ENCODE measurements at regions of chr17 and their contacts with region 1.

Region 1: DNA sequence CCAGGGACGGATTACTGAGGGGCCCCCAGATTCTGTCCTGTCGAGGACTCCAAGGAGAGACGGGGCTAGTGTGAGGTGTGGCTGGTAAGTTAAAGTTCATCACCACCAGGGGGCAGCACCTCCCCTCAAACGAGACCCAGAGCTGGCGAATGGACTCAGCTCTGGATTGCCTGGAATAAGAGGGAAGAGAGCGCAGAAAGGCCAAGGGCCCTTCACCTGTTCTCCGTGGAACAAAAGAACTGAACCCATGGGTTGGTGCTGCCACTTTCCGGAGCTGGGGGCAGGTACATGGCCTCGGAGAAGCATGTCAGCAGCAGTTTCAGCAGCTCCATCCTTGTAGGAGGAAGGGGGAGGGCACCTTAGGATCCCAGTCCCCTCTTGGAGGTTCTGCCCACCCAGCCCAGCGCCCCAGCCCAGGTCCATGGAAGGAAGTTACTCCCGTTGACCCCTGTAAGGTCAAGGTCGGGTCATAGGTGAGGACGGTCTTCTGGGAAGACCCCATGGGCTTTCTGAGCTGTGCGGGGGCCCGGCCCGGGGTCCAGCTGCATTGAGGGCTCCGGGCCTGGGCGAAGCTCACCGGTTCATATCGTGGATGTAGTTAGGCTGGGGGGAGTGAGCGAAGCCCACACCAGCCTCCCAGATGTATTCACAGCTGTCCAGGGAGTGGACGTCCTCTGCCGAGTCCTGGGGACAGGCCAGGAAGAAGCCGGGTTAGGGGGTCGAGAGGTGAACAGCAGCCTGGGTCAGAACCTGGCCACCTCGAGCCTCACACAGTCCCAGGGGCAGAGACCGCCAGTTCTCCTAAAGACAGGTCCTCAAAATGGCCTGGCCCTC is 10.7 kb downstream of the HID1 start:
- DNase-seq: peak; percentile 88 to 91 (median 89)
- ATAC-seq: peak; percentile 78 to 91 (median 86)
- H3K4me3 ChIP-seq: no peak overlapping the region
- H3K27ac ChIP-seq: no peak overlapping the region
- H3K4me1 ChIP-seq: peaks cover 0 to 6% (median 0%) of the 10 kb centered on the region in 12 donors
- H3K27me3 ChIP-seq: peaks cover 0 to 5% (median 0%) of the 10 kb centered on the region in 9 donors
- CTCF ChIP-seq: peak; percentile 67 to 89 (median 80)
- POLR2A ChIP-seq: no peak

Region 2: DNA sequence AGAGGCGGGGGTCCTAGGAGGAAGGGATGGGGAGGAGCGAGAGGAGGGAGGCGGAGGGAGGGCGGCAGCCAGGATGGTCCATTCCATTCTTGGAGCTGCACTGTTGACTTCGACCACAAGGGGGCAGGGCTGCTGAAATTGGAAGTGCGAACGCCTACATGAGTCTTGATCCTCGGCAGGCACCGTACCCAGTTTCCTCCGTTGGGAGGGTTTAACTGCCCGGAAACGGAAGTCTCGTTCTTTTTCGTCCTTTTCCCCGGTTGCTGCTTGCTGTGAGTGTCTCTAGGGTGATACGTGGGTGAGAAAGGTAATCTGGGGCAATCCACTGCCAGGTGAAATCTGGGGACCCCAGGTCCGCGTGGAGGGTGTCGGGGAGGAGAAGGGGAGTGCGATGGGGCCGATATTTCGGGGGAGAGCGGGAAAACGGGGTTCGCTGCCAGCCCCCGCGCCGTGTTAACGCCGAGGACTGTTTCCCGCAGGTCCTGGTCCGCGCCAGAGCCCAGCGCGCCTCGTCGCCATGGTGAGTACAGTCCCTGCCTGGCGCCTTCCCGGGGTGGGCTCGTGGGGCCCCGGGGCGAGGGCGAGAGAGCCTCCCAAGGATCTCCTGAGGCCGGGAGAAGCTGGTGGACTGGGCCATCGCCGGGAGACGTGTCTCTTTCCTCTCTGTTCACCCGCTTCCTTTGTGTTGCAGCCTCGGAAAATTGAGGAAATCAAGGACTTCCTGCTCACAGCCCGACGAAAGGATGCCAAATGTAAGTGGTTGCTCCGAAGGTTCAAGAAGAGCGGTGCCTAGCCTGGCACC is 758.2 kb before region 1 on chr17 and contains the start of gene RPL38:
- intact Hi-C with region 1: no loop called
- DNase-seq: peak; percentile 94 to 97 (median 96)
- ATAC-seq: peak; percentile 81 to 89 (median 86)
- H3K4me3 ChIP-seq: peak within 1 kb of the TSS; percentile 74 to 97 (median 90)
- H3K27ac ChIP-seq: peak within 1 kb of the TSS; percentile 58 to 93 (median 81)
- H3K4me1 ChIP-seq: peaks cover 0 to 55% (median 37%) of the 10 kb centered on the region in 12 donors
- H3K27me3 ChIP-seq: peaks cover 0 to 23% (median 17%) of the 10 kb centered on the region in 9 donors
- CTCF ChIP-seq: peak; percentile 86 to 98 (median 94)
- POLR2A ChIP-seq: peak in 1 of 2 donors; percentile 85
- total RNA-seq, gene RPL38: 244 to 836 (median 739) TPM

Region 3: GRCh38 chr17:74748529-74749365 is 213.1 kb before region 1 on chr17 and contains the start of gene NHERF1:
- intact Hi-C with region 1: loop called in 1 of 10 experiments (anchors 5 kb)
- DNase-seq: peak in 4 of 5 donors; percentile 95 to 97 (median 96)
- ATAC-seq: peak; percentile 91 to 97 (median 96)
- H3K4me3 ChIP-seq: peak within 1 kb of the TSS; percentile 69 to 100 (median 95)
- H3K27ac ChIP-seq: peak within 1 kb of the TSS in 11 of 12 donors; percentile 69 to 92 (median 85)
- H3K4me1 ChIP-seq: peaks cover 2 to 85% (median 40%) of the 10 kb centered on the region in 12 donors
- H3K27me3 ChIP-seq: no peaks in the 10 kb centered on the region
- CTCF ChIP-seq: peak in 6 of 12 donors; percentile 1 to 21 (median 10)
- POLR2A ChIP-seq: peak; percentile 83 to 100
- total RNA-seq, gene NHERF1: 11.6 to 42.2 (median 19.2) TPM

Region 4: GRCh38 chr17:74798239-74798707 is 163.6 kb before region 1 on chr17:
- intact Hi-C with region 1: loop called in 5 of 10 experiments (anchors 2 to 10 kb)
- DNase-seq: no peak
- ATAC-seq: no peak
- H3K4me3 ChIP-seq: no peak overlapping the region
- H3K27ac ChIP-seq: no peak overlapping the region
- H3K4me1 ChIP-seq: no peaks in the 10 kb centered on the region
- H3K27me3 ChIP-seq: no peaks in the 10 kb centered on the region
- CTCF ChIP-seq: no peak
- POLR2A ChIP-seq: no peak

Region 5: DNA sequence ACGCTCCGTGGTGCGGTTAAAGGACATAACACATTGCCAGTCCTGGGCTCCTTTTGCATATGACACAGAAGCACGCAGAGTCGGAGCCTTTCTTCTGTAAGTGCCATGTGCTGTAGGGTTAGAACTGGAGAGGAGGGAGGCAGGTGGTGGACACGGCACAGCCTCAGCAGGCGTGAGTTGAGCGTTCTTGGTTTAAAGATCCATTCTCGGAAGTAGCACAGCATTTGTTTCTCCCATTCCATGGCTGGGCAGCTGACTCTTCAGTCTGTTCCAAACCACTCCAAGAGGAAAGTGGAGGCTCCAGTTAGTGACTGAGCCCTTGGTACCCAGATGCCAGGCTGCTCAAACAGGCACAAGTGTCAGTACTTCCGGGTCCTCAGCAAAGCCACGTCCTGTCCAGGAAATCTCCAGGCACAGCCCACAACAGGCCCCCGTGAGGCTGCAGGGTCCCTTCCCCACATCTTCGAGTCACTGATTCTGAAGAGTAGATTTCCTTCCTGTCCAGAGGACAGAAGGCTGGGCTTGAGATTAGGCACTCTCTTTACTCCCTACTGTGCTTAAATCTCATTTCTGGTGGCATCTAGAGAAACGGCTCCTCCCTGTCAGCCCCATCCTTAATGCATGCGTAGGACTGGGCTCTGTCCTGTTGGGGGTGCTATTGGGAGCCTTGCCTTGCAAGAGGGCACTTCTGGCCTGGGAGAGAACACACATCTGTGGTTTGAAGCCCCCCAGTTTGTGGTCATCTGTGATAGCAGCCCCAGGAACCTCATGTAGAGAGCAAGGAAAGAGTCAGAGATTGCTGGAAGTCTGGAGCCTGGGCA is 146.1 kb before region 1 on chr17:
- intact Hi-C with region 1: no loop called
- DNase-seq: no peak
- ATAC-seq: no peak
- H3K4me3 ChIP-seq: no peak overlapping the region
- H3K27ac ChIP-seq: no peak overlapping the region
- H3K4me1 ChIP-seq: peaks cover 0 to 35% (median 14%) of the 10 kb centered on the region in 12 donors
- H3K27me3 ChIP-seq: no peaks in the 10 kb centered on the region
- CTCF ChIP-seq: peak in 2 of 12 donors; percentile 5 to 8
- POLR2A ChIP-seq: no peak

Region 6: GRCh38 chr17:74898376-74898946 is 63.4 kb before region 1 on chr17:
- intact Hi-C with region 1: no loop called
- DNase-seq: no peak
- ATAC-seq: no peak
- H3K4me3 ChIP-seq: no peak overlapping the region
- H3K27ac ChIP-seq: no peak overlapping the region
- H3K4me1 ChIP-seq: peaks cover 0 to 5% (median 3%) of the 10 kb centered on the region in 12 donors
- H3K27me3 ChIP-seq: peaks cover 7 to 35% (median 21%) of the 10 kb centered on the region in 9 donors
- CTCF ChIP-seq: no peak
- POLR2A ChIP-seq: no peak

Region 7: DNA sequence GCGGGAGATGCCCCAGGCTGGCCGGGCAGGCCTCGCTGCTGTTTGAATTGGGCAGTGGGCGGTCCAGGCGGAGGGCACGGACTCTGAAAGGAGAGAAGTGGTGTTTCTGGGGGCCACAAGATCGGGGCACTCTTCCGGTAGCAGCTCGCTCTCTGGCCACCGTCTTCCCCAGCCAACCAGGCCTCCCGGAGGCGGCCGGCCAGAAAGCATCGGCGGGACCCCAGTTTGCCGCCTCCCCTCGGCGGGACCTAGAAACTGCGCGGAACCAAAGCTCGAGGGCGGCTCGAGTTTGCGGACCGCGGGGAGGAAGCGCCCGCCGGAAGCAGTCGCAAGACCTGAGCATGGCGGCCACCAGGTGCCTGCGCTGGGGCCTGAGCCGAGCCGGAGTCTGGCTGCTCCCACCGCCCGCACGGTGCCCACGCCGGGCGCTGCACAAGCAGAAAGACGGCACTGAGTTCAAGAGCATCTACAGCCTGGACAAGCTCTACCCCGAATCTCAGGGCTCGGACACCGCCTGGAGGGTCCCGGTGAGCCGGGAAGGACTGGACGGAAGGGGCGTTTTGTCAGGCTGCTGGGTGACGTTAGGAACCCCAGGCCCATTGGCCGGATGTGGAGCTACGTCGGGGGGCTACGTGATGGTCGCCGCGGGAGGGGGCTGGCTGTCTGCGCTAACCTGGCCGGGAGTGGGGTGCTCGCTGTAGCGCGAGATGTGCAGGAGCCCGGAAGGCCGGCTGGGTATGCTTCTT is 50.6 kb after region 1 on chr17 and contains the start of gene MRPL58:
- intact Hi-C with region 1: loop called in 8 of 10 experiments (anchors 1 to 5 kb)
- DNase-seq: peak; percentile 83 to 90 (median 87)
- ATAC-seq: peak; percentile 76 to 93 (median 91)
- H3K4me3 ChIP-seq: peak within 1 kb of the TSS; percentile 68 to 96 (median 89)
- H3K27ac ChIP-seq: peak within 1 kb of the TSS; percentile 52 to 96 (median 90)
- H3K4me1 ChIP-seq: peaks cover 0 to 34% (median 22%) of the 10 kb centered on the region in 12 donors
- H3K27me3 ChIP-seq: no peaks in the 10 kb centered on the region
- CTCF ChIP-seq: peak; percentile 37 to 76 (median 64)
- POLR2A ChIP-seq: no peak
- total RNA-seq, gene MRPL58: 41.0 to 89.4 (median 55.8) TPM

Region 8: DNA sequence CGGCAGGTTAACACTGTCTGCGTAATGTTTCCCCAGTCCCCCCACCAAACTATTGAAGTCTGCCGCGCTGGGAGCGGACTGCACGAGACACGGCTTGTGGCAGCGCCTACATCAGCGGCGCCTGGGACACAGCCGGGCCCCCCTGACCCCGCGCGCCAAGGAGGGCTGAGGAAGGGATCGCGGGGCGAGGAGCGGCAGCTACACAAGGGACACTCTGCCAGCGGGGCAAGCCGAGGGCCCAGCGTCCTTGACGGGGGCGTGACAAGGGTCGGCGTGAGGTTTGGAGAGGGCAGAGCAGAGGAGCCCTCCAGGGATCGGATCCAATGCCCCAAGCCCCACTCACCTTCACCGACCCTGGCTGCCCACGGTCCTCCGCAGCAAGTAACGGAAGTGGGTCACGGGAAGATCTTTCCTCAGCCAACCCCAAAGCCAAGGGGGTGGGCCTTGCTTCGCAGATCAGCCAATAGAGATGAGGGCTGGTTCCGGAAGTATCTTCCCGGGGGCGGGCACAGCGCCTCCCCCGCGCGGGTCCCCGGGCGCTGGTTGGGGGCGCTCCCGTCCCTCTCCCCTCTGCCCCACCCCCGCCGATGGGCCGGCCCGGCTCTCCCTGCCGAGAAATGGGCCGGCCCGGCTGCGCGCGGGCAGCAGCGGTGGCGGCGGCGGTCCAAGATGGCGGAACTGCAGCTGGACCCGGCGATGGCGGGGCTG is 84.9 kb after region 1 on chr17 and contains the starts of genes ATP5PD and KCTD2:
- intact Hi-C with region 1: loop called in 1 of 10 experiments (anchors 5 kb)
- DNase-seq: peak; percentile 96 to 98 (median 97)
- ATAC-seq: peak; percentile 97 to 99 (median 98)
- H3K4me3 ChIP-seq: peak within 1 kb of the TSS; percentile 72 to 99 (median 94)
- H3K27ac ChIP-seq: peak within 1 kb of the TSS; percentile 94 to 100 (median 99)
- H3K4me1 ChIP-seq: peaks cover 0 to 44% (median 24%) of the 10 kb centered on the region in 12 donors
- H3K27me3 ChIP-seq: no peaks in the 10 kb centered on the region
- CTCF ChIP-seq: peak in 1 of 12 donors; percentile 15
- POLR2A ChIP-seq: peak; percentile 91 to 95
- total RNA-seq, gene ATP5PD: 597 to 1,208 (median 875) TPM
- total RNA-seq, gene KCTD2: 19.8 to 37.7 (median 31.5) TPM

Region 9: GRCh38 chr17:75124041-75124818 is 162.4 kb after region 1 on chr17:
- intact Hi-C with region 1: loop called in 1 of 10 experiments (anchors 10 kb)
- DNase-seq: peak in 4 of 5 donors; percentile 48 to 80 (median 68)
- ATAC-seq: peak in 3 of 4 donors; percentile 80 to 86 (median 81)
- H3K4me3 ChIP-seq: no peak overlapping the region
- H3K27ac ChIP-seq: peak overlapping the region in 7 of 12 donors; percentile 23 to 62 (median 46)
- H3K4me1 ChIP-seq: peaks cover 0 to 29% (median 9%) of the 10 kb centered on the region in 12 donors
- H3K27me3 ChIP-seq: no peaks in the 10 kb centered on the region
- CTCF ChIP-seq: no peak
- POLR2A ChIP-seq: no peak

Region 10: GRCh38 chr17:75199886-75200618 is 238.2 kb after region 1 on chr17:
- intact Hi-C with region 1: loop called in 9 of 10 experiments (anchors 1 to 5 kb)
- DNase-seq: no peak
- ATAC-seq: no peak
- H3K4me3 ChIP-seq: no peak overlapping the region
- H3K27ac ChIP-seq: no peak overlapping the region
- H3K4me1 ChIP-seq: peaks cover 0 to 11% (median 6%) of the 10 kb centered on the region in 12 donors
- H3K27me3 ChIP-seq: no peaks in the 10 kb centered on the region
- CTCF ChIP-seq: no peak
- POLR2A ChIP-seq: no peak

Measured in heart left ventricle (tissue), 16 donors.